ENCODE measurements at regions of chr2 and their contacts with region 1.

Region 1: GRCh38 chr2:142989273-142990204 is 112.1 kb downstream of the KYNU start:
- DNase-seq: no peak
- ATAC-seq: no peak

Region 2: DNA sequence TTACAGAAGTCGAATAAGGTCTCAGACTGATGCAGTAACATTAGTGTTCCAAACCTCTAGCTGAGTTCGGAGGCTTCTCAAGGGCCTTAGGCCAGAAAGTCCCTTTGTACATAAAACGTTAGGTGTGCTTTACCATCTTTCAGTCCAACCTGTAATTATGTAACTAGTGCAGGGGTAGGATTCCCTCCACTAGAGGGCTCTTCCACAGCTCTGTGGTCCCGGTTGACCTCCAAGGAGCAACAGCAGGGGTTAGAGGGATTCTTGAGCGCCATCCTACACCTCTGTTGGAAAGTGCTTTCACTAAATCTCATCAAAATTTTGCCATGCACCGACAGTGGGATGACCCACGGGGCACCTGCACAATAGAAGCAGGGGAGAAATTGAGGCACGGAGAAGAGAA is 702.9 kb before region 1 on chr2:
- intact Hi-C with region 1: loop called (anchors 5 kb)
- DNase-seq: no peak
- ATAC-seq: no peak

Region 3: DNA sequence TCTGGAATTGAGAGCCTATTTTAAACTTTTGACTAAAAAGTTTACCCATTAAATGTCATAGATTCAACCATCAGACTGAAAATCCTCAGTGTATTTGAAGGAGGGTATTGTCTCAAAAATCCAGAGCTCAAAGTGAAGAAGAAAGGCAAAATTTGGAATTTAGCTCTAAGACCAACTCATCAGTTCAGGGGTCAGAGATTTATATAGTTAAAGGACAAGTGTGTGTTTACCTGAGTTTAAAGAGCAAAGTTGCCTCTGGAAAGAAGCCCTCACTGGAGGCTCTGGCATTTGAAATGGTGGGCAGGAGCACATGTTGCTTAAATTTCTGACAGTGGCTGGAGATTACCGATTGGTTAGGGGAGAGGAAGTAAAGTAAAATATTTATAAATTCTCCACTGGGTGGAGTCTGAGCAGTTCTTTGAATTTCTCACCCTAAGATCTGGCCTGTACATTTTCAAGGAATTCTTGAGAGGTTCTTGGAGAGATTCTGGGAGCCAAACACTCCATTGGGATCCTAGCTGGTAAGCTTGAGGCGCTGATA is 112.3 kb before region 1 on chr2 and contains the start of gene KYNU:
- intact Hi-C with region 1: no loop called
- DNase-seq: no peak
- ATAC-seq: peak; percentile 59
- total RNA-seq, gene KYNU: 6.0 TPM

Region 4: GRCh38 chr2:143357966-143358365 is 368.4 kb after region 1 on chr2:
- intact Hi-C with region 1: no loop called
- DNase-seq: no peak
- ATAC-seq: no peak